Mammary epithelial cell (primary cell): ENCODE measurements at regions of chr11 and their contacts with region 1.

Region 1: GRCh38 chr11:123103326-123103980 is 41.5 kb upstream of the HSPA8 start:
- DNase-seq: peak; percentile 27
- H3K4me3 ChIP-seq: no peak overlapping the region
- H3K27ac ChIP-seq: no peak overlapping the region
- H3K4me1 ChIP-seq: peaks cover 5% of the 10 kb centered on the region
- H3K27me3 ChIP-seq: no peaks in the 10 kb centered on the region
- CTCF ChIP-seq: peak; percentile 42 to 70

Region 2: DNA sequence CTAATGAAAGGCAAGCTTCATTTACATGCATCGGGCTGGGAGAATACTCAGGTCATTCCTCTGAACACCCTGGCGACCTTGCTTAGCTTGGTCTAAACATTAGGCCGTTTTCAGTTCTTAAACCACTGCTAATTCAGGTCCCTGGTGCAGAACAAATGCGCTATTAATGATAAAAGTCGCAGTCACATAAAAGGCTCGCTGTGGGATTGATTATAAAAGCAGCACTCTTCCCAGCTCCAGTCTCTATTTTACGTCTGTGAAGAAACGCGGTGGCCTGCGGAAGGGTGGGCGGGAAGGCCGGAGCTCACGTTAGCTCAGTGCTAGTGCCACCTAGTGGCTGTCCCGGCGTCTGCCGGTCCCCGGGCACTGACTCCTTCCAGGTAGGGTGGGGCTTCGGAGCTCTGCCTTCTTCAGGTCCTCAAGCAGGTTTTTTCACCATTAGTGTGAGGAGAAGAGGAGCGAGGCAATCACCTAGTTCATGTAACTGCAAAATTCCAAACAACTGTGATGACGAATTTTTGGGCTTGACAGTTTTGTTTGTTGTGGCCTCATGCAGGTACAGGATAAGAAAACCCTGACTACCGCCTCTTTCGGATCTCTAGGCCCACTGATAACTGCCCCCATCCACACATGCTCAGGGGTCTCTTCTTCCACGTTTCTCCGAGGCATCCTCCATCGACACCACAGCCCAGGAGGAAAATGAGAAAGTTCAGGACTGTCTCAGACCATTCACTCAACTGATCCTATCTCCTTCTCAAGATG is 158.1 kb after region 1 on chr11:
- CTCF ChIA-PET with region 1: interaction called, 9 read pairs
- dilution Hi-C with region 1: loop called (anchors 5 kb)
- in situ Hi-C with region 1: no loop called
- intact Hi-C with region 1: no loop called
- DNase-seq: peak; percentile 71
- H3K4me3 ChIP-seq: no peak overlapping the region
- H3K27ac ChIP-seq: no peak overlapping the region
- H3K4me1 ChIP-seq: peaks cover 6% of the 10 kb centered on the region
- H3K27me3 ChIP-seq: no peaks in the 10 kb centered on the region
- CTCF ChIP-seq: peak; percentile 89

Region 3: DNA sequence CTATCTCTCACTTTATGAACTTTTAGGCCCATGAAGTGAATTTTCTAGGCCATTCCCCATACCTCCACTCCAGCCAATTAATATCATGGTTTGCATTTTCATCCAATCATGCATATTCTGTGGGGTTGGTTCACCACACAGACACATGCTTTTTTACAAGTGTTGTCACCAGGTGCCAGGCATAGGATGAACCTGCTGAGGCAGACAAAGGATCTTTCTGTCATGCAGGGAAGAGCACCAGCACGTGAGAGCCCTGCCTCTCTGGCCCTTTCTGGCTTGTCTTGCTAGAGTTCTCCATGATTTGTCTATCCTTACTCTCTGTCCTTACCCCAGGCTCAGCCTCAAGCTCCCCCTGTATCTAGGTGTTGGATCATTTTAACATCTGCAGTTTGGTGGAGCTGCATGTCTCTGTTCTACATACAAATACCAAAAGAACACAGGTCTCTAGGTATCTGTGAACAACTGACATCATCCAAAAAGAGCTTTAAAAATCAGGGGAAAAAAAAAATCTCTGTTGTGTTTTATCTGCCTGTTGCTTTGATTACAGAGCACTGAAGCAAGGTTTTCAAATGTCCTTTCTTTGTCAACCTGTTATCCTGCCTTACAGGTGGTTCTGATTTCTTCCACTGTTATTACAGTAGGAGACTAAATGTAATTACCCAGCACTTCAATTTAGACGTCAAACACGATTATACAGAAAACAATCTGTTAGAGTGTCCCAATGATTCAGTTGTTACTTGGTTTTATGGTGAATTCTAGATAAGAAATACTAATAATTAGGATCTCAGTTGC is 268.2 kb after region 1 on chr11:
- CTCF ChIA-PET with region 1: no interaction called
- dilution Hi-C with region 1: no loop called
- in situ Hi-C with region 1: no loop called
- intact Hi-C with region 1: no loop called
- DNase-seq: no peak
- H3K4me3 ChIP-seq: no peak overlapping the region
- H3K27ac ChIP-seq: no peak overlapping the region
- H3K4me1 ChIP-seq: no peaks in the 10 kb centered on the region
- H3K27me3 ChIP-seq: no peaks in the 10 kb centered on the region
- CTCF ChIP-seq: no peak

Region 4: GRCh38 chr11:123407130-123407995 is 303.9 kb after region 1 on chr11:
- CTCF ChIA-PET with region 1: no interaction called
- dilution Hi-C with region 1: no loop called
- in situ Hi-C with region 1: no loop called
- intact Hi-C with region 1: loop called (anchors 10 kb)
- DNase-seq: peak; percentile 41
- H3K4me3 ChIP-seq: no peak overlapping the region
- H3K27ac ChIP-seq: no peak overlapping the region
- H3K4me1 ChIP-seq: no peaks in the 10 kb centered on the region
- H3K27me3 ChIP-seq: peaks cover 7% of the 10 kb centered on the region
- CTCF ChIP-seq: peak; percentile 84 to 87